Prostate gland (tissue), 2 donors: ENCODE measurements at regions of chrX and their contacts with region 1.

Region 1: GRCh38 chrX:2627272-2627867 is 63.7 kb upstream of the CD99 start:
- DNase-seq: peak; percentile 17
- H3K4me3 ChIP-seq: no peak overlapping the region
- H3K27ac ChIP-seq: no peak overlapping the region
- H3K4me1 ChIP-seq: no peaks in the 10 kb centered on the region
- H3K27me3 ChIP-seq: no peaks in the 10 kb centered on the region
- CTCF ChIP-seq: peak in 3 of 4 experiments; percentile 34 to 50 (median 41)
- POLR2A ChIP-seq: no peak

Region 2: GRCh38 chrX:1649621-1650020 is 977.7 kb before region 1 on chrX:
- intact Hi-C with region 1: loop called (anchors 10 kb)
- DNase-seq: no peak
- H3K4me3 ChIP-seq: no peak overlapping the region
- H3K27ac ChIP-seq: no peak overlapping the region
- H3K4me1 ChIP-seq: no peaks in the 10 kb centered on the region
- H3K27me3 ChIP-seq: no peaks in the 10 kb centered on the region
- CTCF ChIP-seq: no peak
- POLR2A ChIP-seq: no peak

Region 3: GRCh38 chrX:2732076-2732475 is 104.7 kb after region 1 on chrX:
- intact Hi-C with region 1: no loop called
- DNase-seq: no peak
- H3K4me3 ChIP-seq: no peak overlapping the region
- H3K27ac ChIP-seq: no peak overlapping the region
- H3K4me1 ChIP-seq: no peaks in the 10 kb centered on the region
- H3K27me3 ChIP-seq: no peaks in the 10 kb centered on the region
- CTCF ChIP-seq: no peak
- POLR2A ChIP-seq: no peak